Dorsolateral prefrontal cortex (tissue), 120 donors: ENCODE measurements at regions of chr2 and their contacts with region 1.

Region 1: DNA sequence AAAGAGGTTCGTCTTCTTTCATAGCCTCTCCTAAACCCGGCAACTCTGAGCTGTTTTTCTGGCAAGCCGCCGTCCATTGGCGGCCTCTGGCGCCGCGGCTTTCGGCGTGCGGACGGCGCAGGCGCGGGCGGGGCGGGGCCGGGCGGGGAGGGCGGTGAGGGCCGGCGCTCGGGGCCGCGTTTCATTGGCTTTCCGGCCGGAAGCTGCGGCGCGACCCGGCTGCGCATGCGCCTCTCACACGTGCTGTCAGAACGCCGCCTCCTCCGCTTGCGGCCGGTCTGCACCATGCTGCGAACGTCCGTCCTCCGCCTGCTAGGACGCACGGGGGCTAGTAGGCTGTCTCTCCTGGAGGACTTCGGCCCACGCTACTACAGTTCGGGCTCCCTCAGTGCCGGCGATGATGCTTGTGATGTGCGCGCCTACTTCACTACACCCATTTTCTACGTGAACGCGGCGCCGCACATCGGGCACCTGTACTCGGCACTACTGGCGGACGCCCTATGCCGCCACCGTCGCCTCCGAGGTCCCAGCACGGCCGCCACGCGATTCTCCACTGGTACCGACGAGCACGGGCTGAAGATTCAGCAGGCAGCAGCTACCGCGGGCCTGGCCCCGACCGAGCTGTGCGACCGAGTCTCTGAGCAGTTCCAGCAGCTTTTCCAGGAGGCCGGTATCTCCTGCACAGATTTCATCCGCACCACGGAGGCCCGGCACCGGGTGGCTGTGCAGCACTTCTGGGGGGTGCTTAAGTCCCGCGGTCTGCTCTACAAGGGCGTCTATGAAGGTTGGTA is at the start of gene MARS2:
- DNase-seq: peak; percentile 82 to 95 (median 90)
- H3K4me3 ChIP-seq: peak within 1 kb of the TSS; percentile 57 to 98 (median 88)
- H3K27ac ChIP-seq: peak within 1 kb of the TSS; percentile 59 to 98 (median 94)
- H3K27me3 ChIP-seq: no peaks in the 10 kb centered on the region
- CTCF ChIP-seq: peak in 44 of 56 donors; percentile 6 to 66 (median 37)
- total RNA-seq, gene MARS2: 6.7 to 16.4 (median 10.3) TPM

Region 2: DNA sequence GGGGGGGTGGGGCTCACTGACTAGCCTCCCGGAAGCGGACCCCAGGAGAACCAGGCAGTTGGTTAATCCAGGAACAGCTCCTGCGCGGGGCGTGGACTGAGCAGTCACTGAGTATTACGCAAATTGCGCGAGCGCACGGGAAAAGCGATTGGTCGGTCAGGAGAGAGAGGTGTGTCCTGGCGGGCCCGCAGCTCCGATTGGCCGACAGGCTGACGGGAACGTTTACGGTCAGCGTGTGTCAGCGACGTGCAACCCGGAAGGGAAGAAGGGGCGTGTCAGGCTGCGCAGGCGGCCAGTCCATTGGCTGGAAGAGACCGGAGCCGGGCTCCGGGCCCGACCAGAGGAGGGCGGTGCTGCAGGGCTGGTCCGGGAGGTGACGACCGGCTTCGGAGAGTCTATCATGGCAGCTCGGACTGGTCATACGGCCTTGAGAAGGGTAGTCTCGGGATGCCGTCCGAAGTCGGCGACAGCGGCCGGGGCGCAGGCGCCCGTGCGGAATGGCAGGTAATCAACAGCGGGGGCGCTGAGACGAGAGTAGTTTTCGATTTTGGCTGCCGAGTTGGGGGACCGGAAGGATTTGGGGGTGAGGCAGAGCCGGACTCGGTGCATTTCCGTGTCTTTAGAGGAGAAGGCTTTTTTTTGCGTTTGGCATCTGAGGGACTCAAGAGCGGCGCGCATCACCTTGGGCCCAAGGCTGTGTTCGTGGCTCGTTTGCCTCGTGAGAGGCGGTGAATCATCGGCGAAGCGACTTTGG is 252.0 kb before region 1 on chr2 and contains the start of gene COQ10B:
- intact Hi-C with region 1: loop called (anchors 1 to 5 kb)
- DNase-seq: peak; percentile 99 to 100 (median 100)
- H3K4me3 ChIP-seq: peak within 1 kb of the TSS; percentile 71 to 100 (median 93)
- H3K27ac ChIP-seq: peak within 1 kb of the TSS; percentile 73 to 100 (median 97)
- H3K27me3 ChIP-seq: no peaks in the 10 kb centered on the region
- CTCF ChIP-seq: peak in 55 of 56 donors; percentile 29 to 82 (median 59)
- total RNA-seq, gene COQ10B: 13.4 to 37.1 (median 27.3) TPM

Region 3: GRCh38 chr2:197515739-197516392 is 189.4 kb before region 1 on chr2 and contains the start of gene MOB4:
- intact Hi-C with region 1: loop called (anchors 5 kb)
- DNase-seq: peak; percentile 84 to 96 (median 92)
- H3K4me3 ChIP-seq: peak within 1 kb of the TSS; percentile 67 to 100 (median 92)
- H3K27ac ChIP-seq: peak within 1 kb of the TSS; percentile 86 to 100 (median 98)
- H3K27me3 ChIP-seq: no peaks in the 10 kb centered on the region
- CTCF ChIP-seq: peak in 43 of 56 donors; percentile 12 to 56 (median 38)
- total RNA-seq, gene MOB4: 12.8 to 47.5 (median 26.2) TPM

Region 4: DNA sequence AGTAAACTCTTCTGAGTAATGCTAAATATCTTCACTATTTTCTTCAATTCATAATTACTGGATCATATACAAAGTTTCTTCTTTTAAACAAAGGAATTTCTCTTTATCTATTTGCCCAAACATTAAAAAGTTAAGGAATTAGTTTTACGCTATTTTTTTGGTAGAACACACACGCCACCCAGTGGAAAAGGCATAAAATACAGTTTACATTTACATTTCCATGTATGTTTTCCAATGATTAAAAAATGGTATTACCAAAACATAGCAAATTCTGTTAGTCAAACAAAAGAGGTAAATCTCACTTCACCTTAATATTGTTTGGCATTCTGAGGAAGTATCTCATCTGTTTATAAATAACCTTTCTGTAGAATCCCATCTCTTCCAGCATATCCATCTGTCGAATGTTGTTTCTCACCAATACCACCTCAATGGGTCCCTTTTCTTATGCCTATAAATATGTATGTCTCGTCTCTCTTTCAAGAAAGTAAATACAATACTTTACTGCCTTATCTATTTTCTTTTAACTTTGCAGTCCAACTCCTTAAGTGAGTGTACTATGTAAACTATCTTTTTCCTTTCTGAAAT is 72.6 kb after region 1 on chr2:
- intact Hi-C with region 1: loop called (anchors 5 kb)
- DNase-seq: no peak
- H3K4me3 ChIP-seq: no peak overlapping the region
- H3K27ac ChIP-seq: no peak overlapping the region
- H3K27me3 ChIP-seq: no peaks in the 10 kb centered on the region
- CTCF ChIP-seq: peak; percentile 61 to 93 (median 80)

Region 5: DNA sequence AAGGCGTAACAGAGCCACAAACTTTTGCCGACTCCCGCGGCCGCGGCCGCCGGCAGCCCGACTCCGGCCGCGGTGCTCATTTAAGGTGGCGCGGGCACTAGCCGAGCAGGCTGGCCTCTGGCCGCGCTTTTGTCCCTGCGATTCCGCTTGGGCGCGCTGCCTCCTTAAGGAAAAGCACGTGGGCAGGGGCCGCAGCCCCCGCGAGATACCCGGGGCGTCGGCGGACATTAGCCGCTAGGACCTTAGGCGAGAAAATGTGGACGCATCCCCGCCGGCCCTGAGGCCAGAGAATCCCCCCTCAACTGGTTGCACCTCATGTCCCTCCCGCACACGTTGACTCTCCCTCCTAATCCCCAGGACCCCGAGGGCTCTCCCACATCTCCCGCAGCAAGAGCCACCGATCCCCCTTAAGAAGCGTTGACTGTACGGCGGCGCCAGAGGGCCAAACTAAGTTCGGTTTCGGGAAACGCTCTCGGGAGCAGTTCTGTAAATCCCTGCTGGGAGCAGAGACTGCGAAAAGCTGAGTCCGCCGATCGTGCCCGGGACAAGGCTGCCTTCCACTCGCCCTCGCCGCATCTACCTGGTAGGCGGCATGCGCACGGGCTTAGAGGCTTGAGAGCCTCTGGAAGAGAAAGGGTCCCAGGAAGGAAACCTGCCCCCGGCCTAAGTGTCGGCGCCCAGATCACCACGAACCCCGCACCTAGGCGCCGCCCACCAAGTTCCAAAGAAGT is 1754.1 kb after region 1 on chr2:
- intact Hi-C with region 1: loop called in 1 of 2 experiments (anchors 5 kb)
- DNase-seq: peak; percentile 88 to 95 (median 92)
- H3K4me3 ChIP-seq: peak overlapping the region; percentile 61 to 100 (median 91)
- H3K27ac ChIP-seq: peak overlapping the region in 58 of 59 donors; percentile 65 to 96 (median 90)
- H3K27me3 ChIP-seq: peaks cover 0 to 69% (median 40%) of the 10 kb centered on the region in 45 donors
- CTCF ChIP-seq: peak in 28 of 56 donors; percentile 5 to 57 (median 20)